Naive thymus-derived CD8-positive, alpha-beta T cell (primary cell): ENCODE measurements at regions of chr12 and their contacts with region 1.

Region 1: GRCh38 chr12:54324617-54325441 is at the start of gene COPZ1:
- DNase-seq: peak; percentile 78 to 98 (median 92)
- ATAC-seq: peak; percentile 96 to 98
- H3K4me3 Mint-ChIP-seq: peak within 1 kb of the TSS; percentile 90 to 100 (median 98)
- H3K27ac Mint-ChIP-seq: peak within 1 kb of the TSS; percentile 92 to 99 (median 97)
- H3K4me1 Mint-ChIP-seq: peaks cover 18 to 47% (median 42%) of the 10 kb centered on the region in 4 donors
- H3K27me3 Mint-ChIP-seq: no peaks in the 10 kb centered on the region
- polyA plus RNA-seq, gene COPZ1: 128 to 152 (median 132) TPM

Region 2: GRCh38 chr12:54359033-54359761 is 34.4 kb after region 1 on chr12:
- POLR2A ChIA-PET with region 1: interaction called, 24 read pairs
- DNase-seq: peak; percentile 80 to 98 (median 94)
- ATAC-seq: peak; percentile 95 to 97
- H3K4me3 Mint-ChIP-seq: no peak overlapping the region
- H3K27ac Mint-ChIP-seq: no peak overlapping the region
- H3K4me1 Mint-ChIP-seq: peaks cover 12 to 19% (median 16%) of the 10 kb centered on the region in 4 donors
- H3K27me3 Mint-ChIP-seq: no peaks in the 10 kb centered on the region

Region 3: DNA sequence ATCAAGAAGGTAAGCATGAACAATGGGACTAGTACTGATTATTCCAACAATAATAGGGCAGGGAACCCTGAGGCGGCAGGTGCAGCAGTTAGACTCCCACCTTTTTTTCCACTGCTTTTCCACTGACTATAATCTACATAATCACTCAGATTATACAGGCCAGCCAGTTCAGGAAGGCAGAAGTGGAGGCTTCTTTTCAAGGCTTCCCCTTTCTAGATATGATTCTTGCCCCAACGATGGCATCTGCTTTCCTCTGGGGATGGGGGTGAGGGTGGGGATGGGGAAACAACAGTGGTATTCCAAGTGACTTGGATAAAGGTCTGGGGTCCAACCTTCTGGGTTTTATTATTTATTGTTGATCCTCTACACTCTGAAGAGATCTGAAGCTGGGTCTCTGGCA is 173.1 kb after region 1 on chr12:
- POLR2A ChIA-PET with region 1: no interaction called
- DNase-seq: no peak
- ATAC-seq: peak in 1 of 2 donors; percentile 21
- H3K4me3 Mint-ChIP-seq: peak overlapping the region; percentile 94 to 99 (median 98)
- H3K27ac Mint-ChIP-seq: peak overlapping the region; percentile 91 to 99 (median 97)
- H3K4me1 Mint-ChIP-seq: peaks cover 18 to 51% (median 43%) of the 10 kb centered on the region in 4 donors
- H3K27me3 Mint-ChIP-seq: no peaks in the 10 kb centered on the region

Region 4: DNA sequence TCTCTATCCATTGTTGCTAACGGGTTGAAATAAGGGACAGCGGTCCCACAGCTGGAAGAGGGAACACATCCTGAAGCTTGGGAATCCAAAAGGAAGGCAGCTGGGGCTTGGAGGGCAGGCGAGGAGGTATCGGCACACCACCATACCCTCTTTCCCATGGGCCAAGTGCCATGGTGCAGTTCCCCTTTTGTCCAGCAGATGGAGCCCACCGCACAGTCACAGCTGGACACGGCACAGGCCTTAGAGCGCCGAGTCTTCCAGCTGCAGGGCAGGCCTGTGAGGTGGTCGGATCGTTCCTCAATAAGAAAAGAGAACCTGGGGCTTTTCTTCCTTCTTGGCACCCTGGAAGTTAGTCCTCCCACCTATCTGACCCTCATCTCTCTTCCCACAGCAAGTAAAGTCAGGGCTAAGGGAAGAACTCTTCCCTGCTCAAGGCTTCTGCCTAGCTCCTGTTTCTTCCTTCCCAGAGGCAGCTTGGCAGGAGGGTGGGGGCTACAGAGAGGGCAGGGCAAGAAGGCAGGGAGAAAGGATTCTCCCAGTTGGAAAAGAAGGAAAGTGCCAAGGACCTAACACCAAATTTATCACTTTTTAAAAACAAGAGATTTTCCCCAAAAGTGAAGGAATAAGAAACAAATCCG is 255.0 kb after region 1 on chr12:
- POLR2A ChIA-PET with region 1: no interaction called
- DNase-seq: peak; percentile 56 to 86 (median 72)
- ATAC-seq: peak; percentile 92 to 99
- H3K4me3 Mint-ChIP-seq: no peak overlapping the region
- H3K27ac Mint-ChIP-seq: peak overlapping the region in 2 of 10 donors; percentile 9 to 71
- H3K4me1 Mint-ChIP-seq: peaks cover 3 to 8% (median 6%) of the 10 kb centered on the region in 4 donors
- H3K27me3 Mint-ChIP-seq: peaks cover 3 to 20% (median 8%) of the 10 kb centered on the region in 5 donors